ENCODE measurements at regions of chr6 and their contacts with region 1.

Region 1: DNA sequence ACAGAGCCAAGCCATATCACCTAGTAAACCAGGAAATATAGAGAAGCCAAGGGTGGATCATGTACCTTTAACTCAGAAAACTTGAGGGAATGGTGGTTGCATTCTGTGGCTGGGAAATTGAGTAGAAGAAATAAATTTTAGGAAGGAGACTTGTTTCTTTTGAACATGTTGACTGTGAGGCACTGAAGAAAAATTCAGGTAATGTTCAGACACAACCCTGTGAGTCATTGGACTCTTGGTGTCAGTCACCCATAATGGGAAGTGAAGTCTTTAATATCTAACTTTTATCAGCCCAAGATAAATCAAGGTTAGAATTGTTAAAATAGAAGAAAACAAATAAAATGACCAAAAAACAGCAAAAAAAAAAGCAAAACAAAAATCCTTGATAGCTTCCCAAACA is 98.8 kb upstream of the GRIK2 start:
- DNase-seq: no peak
- ATAC-seq: no peak
- H3K4me3 ChIP-seq: no peak overlapping the region
- H3K4me3 Mint-ChIP-seq: no peak overlapping the region
- H3K27ac ChIP-seq: no peak overlapping the region
- H3K27ac Mint-ChIP-seq: no peak overlapping the region
- H3K4me1 ChIP-seq: no peaks in the 10 kb centered on the region
- H3K4me1 Mint-ChIP-seq: no peaks in the 10 kb centered on the region
- H3K27me3 ChIP-seq: no peaks in the 10 kb centered on the region
- H3K27me3 Mint-ChIP-seq: no peaks in the 10 kb centered on the region
- CTCF ChIP-seq: no peak

Region 2: GRCh38 chr6:101241442-101241841 is 53.2 kb before region 1 on chr6:
- CTCF ChIA-PET with region 1: no interaction called
- POLR2A ChIA-PET with region 1: no interaction called
- intact Hi-C with region 1: loop called in 1 of 2 experiments (anchors 1 kb)
- DNase-seq: no peak
- ATAC-seq: no peak
- H3K4me3 ChIP-seq: no peak overlapping the region
- H3K4me3 Mint-ChIP-seq: no peak overlapping the region
- H3K27ac ChIP-seq: no peak overlapping the region
- H3K27ac Mint-ChIP-seq: no peak overlapping the region
- H3K4me1 ChIP-seq: no peaks in the 10 kb centered on the region
- H3K4me1 Mint-ChIP-seq: no peaks in the 10 kb centered on the region
- H3K27me3 ChIP-seq: no peaks in the 10 kb centered on the region
- H3K27me3 Mint-ChIP-seq: no peaks in the 10 kb centered on the region
- CTCF ChIP-seq: no peak

Region 3: DNA sequence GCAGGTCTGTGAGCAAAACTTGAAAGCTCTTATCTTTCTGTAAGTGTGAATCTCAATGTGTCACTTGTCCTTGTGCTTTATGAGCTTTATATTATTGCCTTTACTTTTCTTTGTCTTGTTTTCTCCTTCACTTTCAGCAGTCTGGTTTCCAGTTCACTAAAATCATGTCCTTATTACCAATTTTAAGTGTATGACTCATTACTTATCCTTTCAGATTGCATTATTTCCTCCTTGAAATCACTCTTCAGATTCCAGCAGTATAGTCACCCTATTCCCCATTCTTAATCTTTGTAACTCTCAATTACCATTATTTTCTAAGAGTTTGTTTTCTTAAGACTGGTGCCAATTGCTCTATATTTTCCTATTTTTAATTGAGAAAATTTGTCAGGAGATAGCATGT is 18.6 kb before region 1 on chr6:
- CTCF ChIA-PET with region 1: no interaction called
- POLR2A ChIA-PET with region 1: no interaction called
- intact Hi-C with region 1: no loop called
- DNase-seq: no peak
- ATAC-seq: no peak
- H3K4me3 ChIP-seq: no peak overlapping the region
- H3K4me3 Mint-ChIP-seq: no peak overlapping the region
- H3K27ac ChIP-seq: no peak overlapping the region
- H3K27ac Mint-ChIP-seq: no peak overlapping the region
- H3K4me1 ChIP-seq: no peaks in the 10 kb centered on the region
- H3K4me1 Mint-ChIP-seq: no peaks in the 10 kb centered on the region
- H3K27me3 ChIP-seq: no peaks in the 10 kb centered on the region
- H3K27me3 Mint-ChIP-seq: no peaks in the 10 kb centered on the region
- CTCF ChIP-seq: no peak